Mammary epithelial cell (primary cell): ENCODE measurements at regions of chr2 and their contacts with region 1.

Region 1: DNA sequence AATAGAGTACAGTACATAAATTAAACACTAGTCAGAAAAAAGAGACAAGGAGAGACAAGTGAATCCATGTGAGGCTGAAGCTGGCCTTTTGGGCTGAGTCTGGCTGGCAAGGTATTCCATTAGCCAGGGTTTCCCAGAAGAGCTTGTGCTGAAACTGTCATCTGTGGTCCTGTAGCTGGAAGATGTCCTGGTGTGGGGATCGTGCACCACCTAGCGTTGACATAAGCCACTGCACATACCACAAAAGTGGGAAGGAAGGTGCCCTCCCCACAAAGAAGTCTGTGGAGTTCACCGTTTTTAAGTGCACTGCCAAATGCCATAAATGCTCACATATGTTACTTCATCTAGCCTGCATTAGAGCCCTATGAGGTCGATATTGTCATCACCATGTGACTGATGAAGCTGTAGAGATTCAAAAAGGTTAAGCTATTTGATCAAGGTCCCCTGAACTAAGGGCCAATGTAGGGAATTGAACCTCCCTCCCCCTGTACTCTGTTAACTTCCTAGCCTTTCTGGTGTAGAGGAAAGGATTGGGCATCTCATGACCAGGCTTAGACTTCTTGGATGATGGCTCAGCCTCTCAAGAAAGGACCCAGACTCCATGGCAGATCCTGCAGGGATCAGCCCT is 31.9 kb upstream of the GALNT14 start:
- DNase-seq: peak; percentile 60
- H3K4me3 ChIP-seq: no peak overlapping the region
- H3K27ac ChIP-seq: no peak overlapping the region
- H3K4me1 ChIP-seq: no peaks in the 10 kb centered on the region
- H3K27me3 ChIP-seq: no peaks in the 10 kb centered on the region
- CTCF ChIP-seq: peak; percentile 97 to 98

Region 2: GRCh38 chr2:30178618-30179434 is 991.4 kb before region 1 on chr2:
- CTCF ChIA-PET with region 1: no interaction called
- dilution Hi-C with region 1: no loop called
- in situ Hi-C with region 1: loop called in 1 of 2 experiments (anchors 25 kb)
- intact Hi-C with region 1: no loop called
- DNase-seq: peak; percentile 37
- H3K4me3 ChIP-seq: no peak overlapping the region
- H3K27ac ChIP-seq: no peak overlapping the region
- H3K4me1 ChIP-seq: peaks cover 3% of the 10 kb centered on the region
- H3K27me3 ChIP-seq: no peaks in the 10 kb centered on the region
- CTCF ChIP-seq: no peak

Region 3: DNA sequence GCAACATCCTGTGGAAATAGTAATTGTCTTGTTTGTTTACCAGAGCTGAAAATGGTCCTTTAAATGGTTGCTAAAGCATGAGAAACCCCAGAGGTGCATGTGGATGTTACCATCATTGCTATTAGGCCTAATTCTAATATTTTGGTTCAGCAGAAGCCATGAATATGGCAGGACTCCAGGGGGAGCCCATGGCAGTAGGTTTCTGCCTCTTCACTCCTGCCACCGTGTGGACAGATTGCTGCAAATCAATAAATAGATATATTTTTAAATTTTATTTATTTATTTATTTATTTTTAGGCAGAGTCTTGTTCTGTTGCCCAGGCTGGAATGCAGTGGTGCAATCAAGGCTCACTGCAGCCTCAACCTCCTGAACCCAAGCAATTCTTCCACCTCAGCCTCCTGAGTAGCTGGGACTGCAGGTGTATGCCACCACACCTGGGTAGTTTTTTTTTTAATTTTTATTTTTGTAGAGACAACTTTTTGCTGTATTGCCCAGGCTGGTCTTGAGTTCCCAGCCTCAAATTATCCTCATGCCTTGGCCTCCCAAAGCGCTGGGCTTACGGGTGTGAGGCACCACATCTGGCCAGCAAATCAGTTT is 308.0 kb before region 1 on chr2:
- CTCF ChIA-PET with region 1: no interaction called
- dilution Hi-C with region 1: no loop called
- in situ Hi-C with region 1: no loop called
- intact Hi-C with region 1: loop called (anchors 1 kb)
- DNase-seq: peak; percentile 61
- H3K4me3 ChIP-seq: no peak overlapping the region
- H3K27ac ChIP-seq: no peak overlapping the region
- H3K4me1 ChIP-seq: no peaks in the 10 kb centered on the region
- H3K27me3 ChIP-seq: no peaks in the 10 kb centered on the region
- CTCF ChIP-seq: peak; percentile 84 to 89

Region 4: DNA sequence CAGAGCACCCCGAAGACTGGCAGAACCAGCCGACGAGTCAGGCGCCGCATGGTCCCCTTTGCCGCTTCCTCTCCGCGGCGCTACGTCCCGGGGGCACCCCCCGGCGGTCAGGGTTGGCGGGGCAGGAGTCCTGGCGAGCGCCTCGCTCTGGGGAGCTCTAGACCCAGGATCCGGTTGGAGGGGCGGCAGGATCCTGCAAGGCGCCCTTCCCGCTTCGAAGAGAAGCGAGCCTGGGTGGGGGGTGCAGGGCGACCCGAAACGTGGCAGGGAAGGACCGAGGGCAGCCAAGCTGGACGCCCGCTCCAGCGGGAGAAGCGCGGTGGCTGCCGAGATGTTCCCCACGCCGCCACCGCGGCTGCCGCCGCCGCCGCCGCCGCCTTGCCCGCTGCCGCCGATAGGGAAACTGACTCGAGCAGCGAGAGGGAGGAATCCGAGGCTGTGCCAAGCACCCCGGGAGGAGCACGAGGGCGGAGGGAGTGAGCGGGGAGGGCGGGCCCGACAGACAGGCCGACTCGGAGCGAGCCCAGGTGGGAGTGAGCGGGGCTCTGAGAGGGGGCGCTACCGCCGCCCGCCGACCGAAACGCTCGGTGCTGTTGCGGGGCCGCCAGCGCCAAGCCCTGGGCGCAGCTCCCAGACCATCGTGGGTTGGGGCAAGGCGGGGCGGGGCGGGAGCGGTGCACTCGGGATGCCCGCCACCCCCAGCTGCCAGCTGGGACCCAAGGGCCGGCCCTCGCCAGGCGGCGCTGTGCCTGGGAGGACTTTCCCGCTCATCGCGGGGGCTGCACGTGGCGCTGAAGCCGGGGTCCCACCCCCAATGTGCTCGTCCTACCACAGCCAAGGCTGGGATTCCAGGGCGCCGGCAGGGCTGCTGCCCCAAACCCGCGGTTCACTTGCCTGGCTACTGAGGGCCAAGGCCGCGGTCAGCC is 31.9 kb before region 1 on chr2 and contains the start of gene GALNT14:
- CTCF ChIA-PET with region 1: interaction called, 5 read pairs
- dilution Hi-C with region 1: no loop called
- in situ Hi-C with region 1: no loop called
- intact Hi-C with region 1: loop called (anchors 1 kb)
- DNase-seq: peak; percentile 82
- H3K4me3 ChIP-seq: peak within 1 kb of the TSS; percentile 71 to 88 (median 80)
- H3K27ac ChIP-seq: peak within 1 kb of the TSS; percentile 59
- H3K4me1 ChIP-seq: no peaks in the 10 kb centered on the region
- H3K27me3 ChIP-seq: no peaks in the 10 kb centered on the region
- CTCF ChIP-seq: peak; percentile 52 to 72
- total RNA-seq, gene GALNT14: 12.7 to 29.9 TPM

Region 5: GRCh38 chr2:31434911-31435310 is 264.7 kb after region 1 on chr2:
- CTCF ChIA-PET with region 1: no interaction called
- dilution Hi-C with region 1: no loop called
- in situ Hi-C with region 1: no loop called
- intact Hi-C with region 1: loop called (anchors 1 kb)
- DNase-seq: peak; percentile 44
- H3K4me3 ChIP-seq: no peak overlapping the region
- H3K27ac ChIP-seq: no peak overlapping the region
- H3K4me1 ChIP-seq: peaks cover 19% of the 10 kb centered on the region
- H3K27me3 ChIP-seq: no peaks in the 10 kb centered on the region
- CTCF ChIP-seq: peak; percentile 59 to 73

Region 6: DNA sequence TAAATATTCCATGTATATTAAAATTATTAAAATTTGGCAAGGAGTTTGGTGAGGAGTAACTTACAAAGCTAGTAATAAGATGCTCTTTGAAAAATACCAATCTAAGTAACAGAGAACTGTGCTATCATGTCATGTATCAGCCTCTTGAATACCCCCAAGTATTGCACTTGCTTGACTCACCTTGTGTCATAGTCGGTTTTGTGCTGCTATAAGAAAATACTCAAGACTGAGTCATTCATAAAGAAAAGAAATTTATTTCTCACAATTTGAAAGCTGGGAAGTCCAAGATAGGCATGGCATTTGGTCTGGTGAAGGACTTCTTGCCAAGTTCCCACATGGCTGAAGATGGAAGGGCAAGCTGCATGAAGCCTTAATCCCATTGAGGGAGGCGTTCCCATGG is 661.4 kb after region 1 on chr2:
- CTCF ChIA-PET with region 1: no interaction called
- dilution Hi-C with region 1: no loop called
- in situ Hi-C with region 1: no loop called
- intact Hi-C with region 1: loop called (anchors 10 kb)
- DNase-seq: peak; percentile 71
- H3K4me3 ChIP-seq: no peak overlapping the region
- H3K27ac ChIP-seq: no peak overlapping the region
- H3K4me1 ChIP-seq: peaks cover 22% of the 10 kb centered on the region
- H3K27me3 ChIP-seq: no peaks in the 10 kb centered on the region
- CTCF ChIP-seq: no peak